ENCODE measurements at regions of chr9 and their contacts with region 1.

Region 1: DNA sequence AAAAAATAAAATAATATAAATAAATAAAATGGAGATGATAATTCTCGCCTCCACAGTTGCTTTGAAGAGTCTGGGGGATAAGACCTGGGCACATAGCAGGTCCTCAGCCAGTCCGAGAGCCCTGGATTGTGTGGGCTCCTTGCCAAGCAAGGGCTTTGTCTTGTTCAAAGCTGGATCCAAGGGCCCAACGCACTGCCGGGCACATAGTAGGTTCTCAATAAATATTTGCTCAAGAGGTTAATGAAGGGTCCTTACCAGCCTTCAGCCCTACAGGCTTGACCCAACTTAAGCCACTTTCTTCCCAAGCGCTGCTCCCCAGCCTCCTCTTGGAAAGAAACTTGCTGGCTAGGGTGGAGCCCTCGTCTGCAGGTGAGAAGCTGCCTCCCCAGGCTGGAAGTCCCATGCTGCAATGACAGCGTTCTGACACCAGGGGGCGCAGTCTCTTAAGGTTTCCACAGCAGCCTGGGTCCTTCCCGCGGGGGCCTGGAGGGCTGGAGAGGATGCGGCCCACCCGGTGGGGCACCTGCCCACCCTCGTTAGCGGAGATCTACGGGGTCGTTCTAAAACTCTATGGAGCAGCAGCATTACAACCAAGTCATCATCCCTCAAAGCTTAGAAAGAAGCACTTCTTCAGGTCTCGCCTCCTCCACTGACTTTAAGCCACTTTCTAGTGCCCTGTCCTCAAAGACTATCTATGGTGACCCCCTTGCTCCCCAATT is 115.2 kb downstream of the LHX2 start:
- DNase-seq: peak; percentile 87
- ATAC-seq: peak; percentile 70

Region 2: DNA sequence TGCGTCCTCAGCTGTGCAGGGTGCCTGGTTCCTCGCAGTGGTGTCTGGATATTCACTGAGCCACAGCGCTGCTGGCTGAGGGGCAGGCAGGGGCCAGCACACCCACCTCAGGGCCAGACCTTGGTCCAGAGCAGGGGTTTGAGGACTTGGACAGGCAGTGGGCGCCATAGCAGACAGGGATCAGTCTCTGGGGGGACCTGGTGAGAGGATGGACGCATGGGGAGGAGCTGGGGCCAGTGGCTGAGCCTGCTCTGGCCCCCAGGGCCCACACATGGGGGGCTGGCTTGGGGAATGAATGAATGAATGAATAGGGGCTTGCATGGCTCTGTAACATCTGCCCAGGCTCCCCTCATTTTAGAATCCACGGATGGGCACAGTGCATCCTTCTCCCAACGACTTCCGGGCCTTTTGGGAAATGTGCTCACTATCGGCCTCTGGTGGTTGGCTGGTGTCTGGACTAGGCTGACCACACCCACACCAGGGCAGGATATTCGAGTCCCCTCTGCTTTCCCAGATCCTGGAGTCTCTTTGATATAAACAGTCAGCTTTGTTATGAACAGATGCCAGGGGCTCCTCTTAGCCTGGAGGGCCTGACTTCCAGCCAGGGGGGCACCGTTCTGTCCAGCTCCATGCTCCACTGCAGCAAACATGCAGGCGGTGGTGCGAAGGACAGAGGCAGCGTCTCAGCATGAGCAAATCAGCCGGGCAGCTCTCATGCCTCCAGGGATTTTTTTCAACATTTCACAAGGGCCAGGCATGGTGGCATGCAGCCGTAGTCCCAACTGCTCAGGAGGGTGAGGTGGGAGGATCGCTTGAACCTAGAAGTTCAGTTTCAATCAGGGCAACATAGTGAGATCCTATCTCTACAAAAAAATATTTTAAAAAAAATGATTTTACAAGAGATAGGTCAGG is 193.6 kb after region 1 on chr9:
- intact Hi-C with region 1: loop called (anchors 5 kb)
- DNase-seq: peak; percentile 85
- ATAC-seq: peak; percentile 88

Region 3: GRCh38 chr9:124549016-124549415 is 422.3 kb after region 1 on chr9:
- intact Hi-C with region 1: loop called (anchors 10 kb)
- DNase-seq: no peak
- ATAC-seq: no peak